GM10248 (cell line): ENCODE measurements at regions of chr20 and their contacts with region 1.

Region 1: GRCh38 chr20:33862709-33863403 is 51.7 kb downstream of the CHMP4B start:
- DNase-seq: peak; percentile 83
- CTCF ChIP-seq: peak; percentile 87

Region 2: DNA sequence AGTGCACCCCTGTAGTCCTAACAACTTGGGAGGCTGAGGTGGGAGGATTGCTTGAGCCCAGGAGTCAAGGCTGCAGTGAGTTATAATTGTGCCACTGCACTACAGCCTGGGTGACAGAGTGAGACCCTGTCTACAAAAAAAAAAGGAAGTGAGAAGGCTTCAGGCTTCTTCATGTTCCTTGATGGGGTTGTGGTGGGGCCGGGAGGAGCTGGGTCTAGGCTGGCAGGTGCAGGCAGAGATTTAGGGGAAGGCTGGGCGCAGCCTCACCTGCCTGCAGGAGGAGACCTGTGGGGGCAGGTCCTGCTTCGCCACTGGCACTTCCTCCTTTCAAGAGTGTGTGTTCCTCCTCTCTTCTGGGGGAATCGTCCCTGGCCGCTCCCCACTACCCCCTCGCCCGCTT is 12.2 kb after region 1 on chr20:
- CTCF ChIA-PET with region 1: interaction called, 13 read pairs
- POLR2A ChIA-PET with region 1: no interaction called
- DNase-seq: peak; percentile 62
- CTCF ChIP-seq: no peak

Region 3: DNA sequence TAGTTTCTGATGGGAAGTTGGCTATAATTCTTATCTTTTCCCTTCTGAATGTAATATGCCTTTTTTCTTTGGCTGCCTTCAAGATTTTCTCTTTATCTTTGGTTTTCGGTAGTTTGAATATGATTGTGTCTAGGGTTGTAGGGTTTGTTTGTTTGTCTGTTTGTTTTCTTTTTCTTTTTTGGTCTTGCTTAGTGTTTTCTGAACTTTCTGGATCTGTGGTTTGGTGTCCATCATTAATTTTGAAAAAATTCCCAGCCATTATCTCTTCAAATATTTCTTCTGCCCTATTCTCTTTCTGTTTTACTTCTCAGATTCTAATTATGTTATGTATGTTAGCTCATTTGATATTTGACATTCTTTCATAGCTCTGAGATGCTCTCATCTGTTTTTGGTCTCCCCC is 27.7 kb after region 1 on chr20:
- CTCF ChIA-PET with region 1: no interaction called
- POLR2A ChIA-PET with region 1: no interaction called
- DNase-seq: no peak
- CTCF ChIP-seq: no peak

Region 4: DNA sequence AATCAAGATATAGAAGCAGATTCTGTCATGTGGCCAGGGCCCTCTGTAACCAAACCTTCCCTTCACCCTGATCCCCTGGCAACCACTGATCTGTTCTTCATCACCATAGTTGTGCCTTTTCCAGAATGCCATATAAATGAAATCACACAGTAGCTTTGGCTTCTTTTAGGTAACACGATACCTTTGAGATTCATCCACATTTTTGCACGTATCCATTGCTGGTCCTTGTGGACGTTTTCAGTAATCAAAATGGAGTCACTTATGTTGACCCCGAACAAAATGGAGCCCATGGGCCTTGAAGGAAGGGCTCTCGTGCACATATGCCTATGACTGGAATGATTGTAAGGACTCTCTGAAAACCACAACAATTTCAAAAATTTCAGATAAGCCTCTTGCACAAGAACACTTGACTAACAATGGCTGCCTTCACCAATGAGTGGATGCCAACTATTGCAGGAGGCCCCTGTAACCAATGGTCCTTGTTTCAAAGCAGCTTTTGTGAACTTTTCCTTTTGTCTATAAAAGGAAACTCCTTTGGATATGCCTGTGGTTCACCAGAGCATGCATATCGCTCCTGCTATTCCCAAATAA is 46.6 kb after region 1 on chr20:
- CTCF ChIA-PET with region 1: interaction called, 10 read pairs
- POLR2A ChIA-PET with region 1: no interaction called
- DNase-seq: no peak
- CTCF ChIP-seq: no peak